ENCODE measurements at regions of chr14 and their contacts with region 1.

Region 1: GRCh38 chr14:103562429-103563225 is at the starts of genes BAG5 and COA8:
- DNase-seq: peak; percentile 96
- total RNA-seq, gene BAG5: 29.0 to 30.4 TPM
- total RNA-seq, gene COA8: 33.9 to 40.3 TPM

Region 2: DNA sequence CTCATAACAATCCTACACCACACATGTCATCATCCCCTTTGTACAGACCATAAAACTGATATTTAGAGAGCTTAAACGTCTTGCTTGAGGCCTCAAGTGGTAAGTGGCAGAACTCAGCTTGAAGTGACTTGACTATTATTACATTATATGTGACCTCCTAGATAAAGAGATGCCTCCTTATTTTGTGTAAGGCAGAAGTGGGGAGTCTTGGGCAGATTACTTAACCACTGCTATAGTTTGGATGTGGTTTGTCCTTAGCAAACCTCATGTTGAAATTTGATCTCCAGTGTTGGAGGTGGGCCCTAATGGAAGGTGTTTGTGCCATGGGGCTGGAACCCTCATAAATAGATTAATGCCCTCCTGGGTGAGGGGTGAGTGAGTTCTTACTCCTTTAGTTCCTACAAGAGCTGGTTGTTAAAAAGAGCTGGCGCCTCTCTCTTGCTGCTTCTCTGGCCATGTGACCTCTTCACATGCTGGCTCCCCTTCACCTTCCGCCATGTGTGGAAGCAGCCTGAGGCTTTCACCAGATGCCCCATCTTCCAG is 932.7 kb before region 1 on chr14:
- intact Hi-C with region 1: loop called in 1 of 2 experiments (anchors 5 kb)
- DNase-seq: no peak